Endothelial cell of umbilical vein (primary cell): ENCODE measurements at regions of chr14 and their contacts with region 1.

Region 1: DNA sequence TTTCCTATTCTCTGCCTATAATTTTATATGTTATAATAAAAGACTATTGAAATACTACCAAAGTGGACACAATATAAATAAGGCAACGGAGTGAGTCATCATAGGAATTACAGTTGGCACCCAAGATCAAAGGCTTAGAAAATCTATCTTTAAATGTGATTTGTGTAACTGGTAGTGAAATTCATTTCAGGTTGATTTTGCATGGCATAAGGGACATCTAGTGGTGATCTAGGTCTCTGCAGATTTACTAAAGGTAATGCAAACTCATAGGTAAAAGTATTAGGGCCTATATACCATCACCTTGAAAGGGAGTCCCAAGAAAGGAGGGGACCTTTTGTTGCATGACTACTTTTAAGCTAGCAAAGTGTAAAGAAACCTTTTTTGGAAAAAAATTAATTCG is 527.2 kb downstream of the NRXN3 start:
- DNase-seq: peak; percentile 46
- H3K4me3 ChIP-seq: no peak overlapping the region
- H3K27ac ChIP-seq: no peak overlapping the region
- H3K4me1 ChIP-seq: no peaks in the 10 kb centered on the region
- H3K27me3 ChIP-seq: no peaks in the 10 kb centered on the region
- CTCF ChIP-seq: peak; percentile 11 to 35
- POLR2A ChIP-seq: no peak

Region 2: DNA sequence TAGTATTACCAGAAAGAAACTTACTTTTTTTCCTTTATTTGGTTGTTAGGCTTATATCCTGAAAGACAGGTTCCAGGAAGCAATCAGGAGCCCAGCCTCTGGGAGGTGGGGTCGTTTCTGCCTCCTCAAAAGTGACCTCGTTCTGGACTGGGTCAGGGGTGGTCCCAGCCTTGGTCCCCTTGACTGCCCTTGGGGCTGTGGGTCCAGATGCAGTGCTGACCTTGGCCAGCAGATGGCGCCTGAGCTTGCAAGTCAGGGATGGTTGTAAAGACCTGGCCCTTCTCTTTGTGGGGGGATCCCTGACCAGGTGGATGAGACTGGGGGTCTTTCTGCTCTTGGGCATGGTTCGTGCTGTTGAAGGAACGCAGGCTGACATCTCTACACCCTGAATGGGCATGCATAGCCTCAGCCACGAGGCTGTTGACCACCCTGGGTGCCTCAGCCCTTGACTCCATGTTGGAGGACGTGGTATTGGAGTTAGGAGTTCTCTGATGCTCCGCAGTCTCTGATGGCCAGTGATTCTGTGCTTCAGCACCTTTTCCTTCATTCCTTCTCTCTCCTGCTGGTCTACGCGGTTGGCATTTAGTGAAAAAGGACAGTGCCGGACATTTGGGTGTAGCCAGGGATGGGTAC is 835.1 kb before region 1 on chr14:
- CTCF ChIA-PET with region 1: interaction called, 7 read pairs
- POLR2A ChIA-PET with region 1: no interaction called
- dilution Hi-C with region 1: no loop called
- intact Hi-C with region 1: loop called (anchors 2 kb)
- DNase-seq: peak; percentile 57
- H3K4me3 ChIP-seq: no peak overlapping the region
- H3K27ac ChIP-seq: no peak overlapping the region
- H3K4me1 ChIP-seq: no peaks in the 10 kb centered on the region
- H3K27me3 ChIP-seq: no peaks in the 10 kb centered on the region
- CTCF ChIP-seq: peak; percentile 97 to 99
- POLR2A ChIP-seq: no peak

Region 3: GRCh38 chr14:78022059-78022458 is 675.3 kb before region 1 on chr14:
- CTCF ChIA-PET with region 1: interaction called, 9 read pairs
- POLR2A ChIA-PET with region 1: no interaction called
- dilution Hi-C with region 1: no loop called
- intact Hi-C with region 1: loop called (anchors 1 kb)
- DNase-seq: peak; percentile 44
- H3K4me3 ChIP-seq: no peak overlapping the region
- H3K27ac ChIP-seq: no peak overlapping the region
- H3K4me1 ChIP-seq: no peaks in the 10 kb centered on the region
- H3K27me3 ChIP-seq: no peaks in the 10 kb centered on the region
- CTCF ChIP-seq: peak; percentile 54 to 61
- POLR2A ChIP-seq: no peak

Region 4: DNA sequence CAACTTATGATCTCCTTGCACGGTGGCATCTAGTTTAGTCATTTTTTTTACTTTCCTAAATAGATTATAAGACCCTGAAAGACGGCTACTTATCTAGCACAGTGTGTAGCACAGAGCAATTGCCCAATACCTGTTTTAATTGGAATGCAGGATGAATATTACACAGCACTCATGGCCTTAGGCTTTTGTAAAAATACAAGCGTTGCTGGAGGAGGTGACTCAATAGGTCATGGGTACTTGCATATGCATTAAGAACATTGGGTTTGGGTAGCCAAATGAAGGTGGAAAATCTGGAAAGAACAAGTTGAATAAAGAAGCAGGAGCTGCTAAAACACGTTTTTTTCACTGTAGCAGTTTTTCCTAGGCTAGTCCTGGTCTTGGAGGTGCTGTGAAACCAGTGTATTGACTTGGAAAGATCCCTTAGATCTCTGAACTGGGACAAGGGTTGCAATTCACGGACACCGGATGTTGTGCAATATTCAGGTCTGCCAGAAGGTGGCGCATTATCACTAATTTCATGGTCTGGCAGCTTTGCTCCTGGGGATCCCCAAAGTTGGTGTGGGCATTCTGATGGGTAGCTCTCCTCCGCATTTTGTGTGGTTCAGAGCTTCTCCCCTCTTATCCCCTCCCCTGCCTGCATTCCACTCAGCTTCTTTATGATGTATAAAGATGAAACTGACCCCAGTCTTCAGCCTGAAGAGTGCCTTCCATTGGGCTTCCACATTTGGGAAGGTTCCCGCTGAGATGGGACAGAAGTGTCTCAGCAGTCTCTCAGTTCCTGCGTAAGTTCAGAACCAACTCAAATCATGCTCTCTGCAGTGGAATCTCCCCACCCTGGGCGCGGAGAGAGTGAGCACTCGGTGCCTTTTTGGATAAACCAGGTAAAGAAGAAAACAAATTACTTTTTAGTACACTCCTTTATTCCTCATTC is 248.9 kb before region 1 on chr14:
- CTCF ChIA-PET with region 1: interaction called, 7 read pairs
- POLR2A ChIA-PET with region 1: no interaction called
- dilution Hi-C with region 1: no loop called
- intact Hi-C with region 1: loop called (anchors 1 kb)
- DNase-seq: peak; percentile 47
- H3K4me3 ChIP-seq: no peak overlapping the region
- H3K27ac ChIP-seq: no peak overlapping the region
- H3K4me1 ChIP-seq: no peaks in the 10 kb centered on the region
- H3K27me3 ChIP-seq: no peaks in the 10 kb centered on the region
- CTCF ChIP-seq: peak; percentile 63 to 66
- POLR2A ChIP-seq: no peak